Calu3 (cell line): ENCODE measurements at regions of chrX and their contacts with region 1.

Region 1: DNA sequence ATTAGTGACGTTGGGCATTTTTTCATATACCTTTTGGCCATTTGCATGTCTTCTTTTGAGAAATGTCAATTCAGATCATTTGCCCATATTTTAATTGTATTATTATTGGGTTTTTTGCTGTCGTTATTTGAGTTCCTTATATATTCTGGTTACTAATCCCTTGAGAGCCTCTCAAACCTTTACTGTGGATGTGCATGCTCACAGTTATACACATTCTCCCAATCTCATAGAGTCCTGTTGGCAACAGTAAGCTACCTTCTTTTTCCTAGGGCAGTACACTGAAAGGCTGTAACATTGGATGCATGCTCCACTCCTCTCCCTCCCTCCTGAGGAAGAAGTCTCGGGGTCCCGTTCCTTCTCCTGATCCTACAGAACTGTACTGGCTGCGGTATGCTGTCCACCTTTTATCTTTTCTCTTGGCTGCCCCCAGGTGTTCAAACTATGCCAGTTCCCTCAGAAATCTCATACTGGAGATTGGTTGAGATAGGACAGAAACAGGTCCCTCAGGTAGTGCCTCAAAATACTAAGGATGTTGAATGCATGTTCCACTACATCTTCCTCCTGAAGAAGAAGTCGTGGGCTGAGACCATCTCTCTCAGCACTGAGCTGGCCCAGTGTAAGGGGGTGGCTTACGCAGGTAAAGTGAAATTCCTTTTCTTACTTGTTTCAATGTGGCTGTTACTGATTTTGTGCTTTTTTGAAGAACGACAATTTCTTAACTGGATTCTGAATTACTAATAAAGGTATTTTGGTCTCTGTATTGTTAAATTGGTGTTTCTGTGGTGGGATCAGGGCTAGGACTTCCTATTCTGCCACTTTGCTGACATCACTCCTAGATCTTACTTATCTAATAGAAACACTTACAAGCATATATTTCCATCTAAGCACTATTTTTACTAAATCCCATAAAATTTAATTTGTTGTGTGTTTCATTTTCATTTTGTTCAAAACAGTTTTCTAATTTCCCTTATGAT is 145.4 kb upstream of the HUWE1 start:
- DNase-seq: peak; percentile 65
- H3K4me3 Mint-ChIP-seq: no peak overlapping the region
- H3K27ac Mint-ChIP-seq: no peak overlapping the region
- H3K4me1 Mint-ChIP-seq: no peaks in the 10 kb centered on the region
- H3K27me3 Mint-ChIP-seq: no peaks in the 10 kb centered on the region
- CTCF ChIP-seq: peak; percentile 34

Region 2: DNA sequence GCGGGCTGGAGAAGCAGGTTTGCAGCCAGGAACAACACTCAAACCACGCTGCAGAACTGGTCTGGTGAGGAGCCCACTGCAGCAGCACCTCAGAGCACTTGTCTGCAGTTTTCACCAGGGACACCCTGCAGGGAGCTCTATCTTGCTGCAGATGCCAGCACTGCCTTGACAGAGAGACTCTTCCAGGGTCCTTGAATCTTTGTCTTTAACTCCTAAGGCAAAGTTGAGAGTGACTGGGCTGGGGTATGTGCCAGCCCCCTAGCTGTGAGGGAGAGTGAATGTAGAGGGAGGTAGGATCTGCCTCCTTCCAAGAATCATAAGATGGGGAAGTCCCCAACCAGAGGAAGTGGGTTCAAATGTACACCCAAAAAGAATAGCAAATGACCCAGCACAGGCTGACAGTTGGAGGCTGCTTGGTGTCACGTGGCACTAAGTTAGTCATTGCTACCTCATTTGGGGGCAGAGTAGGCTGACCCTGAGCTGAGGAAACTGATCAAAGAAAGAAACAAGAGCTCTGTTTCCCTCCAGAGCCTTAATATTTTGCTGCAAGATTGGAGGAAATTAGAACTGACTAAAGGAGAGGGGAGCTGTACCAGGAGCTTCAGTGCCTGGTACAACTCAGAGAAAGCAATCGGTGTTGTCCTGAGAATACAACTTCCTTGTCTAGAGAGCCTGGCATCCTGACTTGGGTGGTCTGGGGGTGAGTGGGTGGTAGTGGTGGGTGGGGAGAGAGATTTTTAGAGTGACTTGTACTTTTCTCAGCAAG is 117.2 kb before region 1 on chrX:
- CTCF ChIA-PET with region 1: no interaction called
- intact Hi-C with region 1: loop called (anchors 10 kb)
- DNase-seq: peak; percentile 75
- H3K4me3 Mint-ChIP-seq: peak overlapping the region; percentile 64
- H3K27ac Mint-ChIP-seq: peak overlapping the region; percentile 93
- H3K4me1 Mint-ChIP-seq: peaks cover 48% of the 10 kb centered on the region
- H3K27me3 Mint-ChIP-seq: no peaks in the 10 kb centered on the region
- CTCF ChIP-seq: no peak